ENCODE measurements at regions of chr20 and their contacts with region 1.

Region 1: DNA sequence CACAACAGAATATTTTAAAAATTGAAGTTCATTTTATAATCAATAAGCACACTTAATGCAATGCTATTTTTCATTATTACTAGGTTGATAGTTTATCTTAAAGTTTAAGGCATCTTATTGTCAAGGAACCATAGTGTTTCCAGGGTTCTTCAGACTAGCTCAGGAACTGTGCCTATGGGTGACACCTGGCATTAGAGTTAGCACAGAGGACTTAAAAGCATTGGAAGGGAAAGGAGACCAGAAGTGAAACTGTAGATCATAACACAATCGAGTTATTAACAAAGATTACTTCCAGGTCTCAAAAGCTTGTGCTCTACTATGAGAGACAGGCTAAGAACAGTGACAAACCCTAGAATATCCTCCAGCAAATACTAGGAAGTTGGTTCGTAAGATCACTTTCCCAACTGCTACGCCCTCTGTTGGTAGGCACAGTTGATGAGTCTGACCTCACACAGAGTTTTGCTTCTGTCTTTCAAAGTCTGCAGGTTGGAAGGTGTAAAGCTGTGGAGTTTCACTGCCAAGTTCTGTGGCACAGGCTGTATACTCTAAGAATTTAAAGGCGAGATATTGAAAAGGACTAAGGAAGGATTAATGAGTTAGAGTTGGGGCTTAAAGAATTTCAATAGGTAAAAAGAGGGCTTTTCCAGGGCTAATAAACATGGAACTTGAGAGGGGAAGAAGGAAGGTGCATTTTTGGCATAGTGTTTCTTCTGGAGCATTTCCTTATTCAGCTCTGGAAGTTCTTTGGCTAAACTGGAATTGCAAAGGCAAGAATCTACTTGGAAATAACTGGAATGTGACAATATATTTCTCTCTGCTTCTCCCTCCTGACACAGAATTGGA is 531.3 kb upstream of the JAG1 start:
- DNase-seq: no peak
- H3K4me3 ChIP-seq: no peak overlapping the region
- CTCF ChIP-seq: peak; percentile 73

Region 2: GRCh38 chr20:11216451-11217314 is 11.5 kb after region 1 on chr20:
- CTCF ChIA-PET with region 1: interaction called, 20 read pairs
- POLR2A ChIA-PET with region 1: interaction called, 4 read pairs
- DNase-seq: peak; percentile 71
- H3K4me3 ChIP-seq: no peak overlapping the region
- CTCF ChIP-seq: no peak

Region 3: DNA sequence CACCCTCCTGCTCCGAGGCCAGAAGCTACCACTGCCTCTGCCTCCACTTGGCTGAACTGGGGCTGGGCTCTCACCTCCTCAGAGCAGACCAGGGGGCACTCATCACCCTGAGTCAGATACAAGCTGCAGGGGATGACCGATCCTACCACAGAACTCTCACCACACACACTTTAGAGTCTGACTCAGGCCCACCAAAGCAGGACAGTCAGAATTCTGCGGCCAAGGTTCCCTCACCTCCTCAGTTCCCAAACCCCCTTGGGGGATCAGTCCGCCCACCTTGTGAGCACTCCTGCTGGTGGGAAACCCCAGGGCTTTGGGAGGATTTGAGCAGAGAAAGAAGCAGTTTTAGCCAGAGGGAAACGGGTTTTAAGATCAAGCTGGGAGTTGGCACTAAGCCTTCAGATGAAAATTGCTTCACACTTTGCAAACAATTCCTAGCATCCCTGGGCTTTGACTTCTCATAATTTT is 56.4 kb after region 1 on chr20:
- CTCF ChIA-PET with region 1: interaction called, 11 read pairs
- POLR2A ChIA-PET with region 1: no interaction called
- DNase-seq: peak; percentile 74
- H3K4me3 ChIP-seq: no peak overlapping the region
- CTCF ChIP-seq: no peak

Region 4: DNA sequence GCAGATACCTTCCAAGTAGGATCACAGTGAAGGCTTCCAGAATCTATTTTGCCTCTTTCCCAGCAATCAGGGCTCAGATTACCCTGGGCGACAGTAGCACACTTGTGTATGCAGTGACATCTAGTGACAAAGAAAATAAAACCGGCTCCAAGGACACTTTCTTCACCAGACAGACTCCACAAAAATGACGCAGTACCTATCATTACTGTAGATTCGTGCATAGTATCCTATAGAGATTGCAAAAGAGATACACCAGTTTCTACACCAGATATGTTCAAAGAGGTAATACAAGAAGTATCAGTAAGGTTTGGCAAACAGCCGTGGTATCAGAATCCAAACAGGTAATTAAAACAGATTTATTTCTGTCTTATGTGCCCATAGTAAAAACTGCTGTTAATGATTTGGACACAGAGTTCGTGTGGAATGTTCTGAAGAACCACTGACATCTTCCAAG is 69.0 kb after region 1 on chr20:
- CTCF ChIA-PET with region 1: no interaction called
- POLR2A ChIA-PET with region 1: no interaction called
- DNase-seq: peak; percentile 55
- H3K4me3 ChIP-seq: no peak overlapping the region
- CTCF ChIP-seq: peak; percentile 35